ENCODE measurements at regions of chr4 and their contacts with region 1.

Region 1: DNA sequence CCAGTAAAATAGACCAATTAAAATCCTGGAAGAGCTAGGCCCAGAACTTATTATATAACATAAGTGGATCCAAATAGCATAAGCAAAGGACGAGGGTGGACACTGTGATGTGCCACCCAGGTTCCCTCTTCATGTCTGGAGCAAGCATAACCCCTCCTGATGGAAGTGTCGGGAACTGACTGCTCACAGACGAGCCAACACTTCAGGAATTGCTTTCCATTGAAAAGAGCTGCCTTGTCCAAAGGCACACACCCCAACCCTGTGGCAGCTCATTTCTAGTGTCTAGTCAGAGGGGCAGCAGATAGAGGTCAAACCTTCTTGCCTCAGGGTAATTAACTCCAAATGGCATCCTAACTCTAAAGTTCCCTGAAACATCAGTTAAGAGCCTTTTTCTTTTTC is 15.3 kb downstream of the DDIT4L start:
- DNase-seq: no peak
- ATAC-seq: peak in 1 of 4 donors; percentile 12
- H3K4me3 ChIP-seq: no peak overlapping the region
- H3K27ac ChIP-seq: no peak overlapping the region
- H3K4me1 ChIP-seq: peaks cover 12% of the 10 kb centered on the region
- H3K27me3 ChIP-seq: no peaks in the 10 kb centered on the region
- CTCF ChIP-seq: no peak

Region 2: DNA sequence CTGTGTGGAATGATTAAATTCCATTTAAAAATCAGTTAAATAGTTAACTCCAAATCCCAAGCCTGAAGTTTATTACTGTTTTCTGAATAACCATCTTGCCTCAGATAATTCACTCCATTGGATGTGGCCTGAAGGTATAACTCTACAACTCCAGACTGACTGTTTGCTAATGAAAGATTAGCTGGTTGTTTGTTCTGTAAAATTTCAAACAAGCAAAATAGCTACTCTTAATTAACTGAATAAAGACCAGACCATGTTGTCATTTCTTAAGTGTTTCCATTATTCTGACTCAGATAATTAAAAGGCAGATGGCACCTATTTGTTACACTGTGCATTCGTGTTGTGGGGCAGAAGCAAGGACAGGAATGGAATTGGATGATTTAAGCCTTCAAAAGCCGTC is 93.8 kb after region 1 on chr4:
- intact Hi-C with region 1: no loop called
- DNase-seq: no peak
- ATAC-seq: no peak
- H3K4me3 ChIP-seq: no peak overlapping the region
- H3K27ac ChIP-seq: no peak overlapping the region
- H3K4me1 ChIP-seq: no peaks in the 10 kb centered on the region
- H3K27me3 ChIP-seq: no peaks in the 10 kb centered on the region
- CTCF ChIP-seq: no peak

Region 3: GRCh38 chr4:100494166-100494825 is 319.3 kb after region 1 on chr4:
- intact Hi-C with region 1: no loop called
- DNase-seq: no peak
- ATAC-seq: no peak
- H3K4me3 ChIP-seq: no peak overlapping the region
- H3K27ac ChIP-seq: no peak overlapping the region
- H3K4me1 ChIP-seq: no peaks in the 10 kb centered on the region
- H3K27me3 ChIP-seq: no peaks in the 10 kb centered on the region
- CTCF ChIP-seq: no peak

Region 4: DNA sequence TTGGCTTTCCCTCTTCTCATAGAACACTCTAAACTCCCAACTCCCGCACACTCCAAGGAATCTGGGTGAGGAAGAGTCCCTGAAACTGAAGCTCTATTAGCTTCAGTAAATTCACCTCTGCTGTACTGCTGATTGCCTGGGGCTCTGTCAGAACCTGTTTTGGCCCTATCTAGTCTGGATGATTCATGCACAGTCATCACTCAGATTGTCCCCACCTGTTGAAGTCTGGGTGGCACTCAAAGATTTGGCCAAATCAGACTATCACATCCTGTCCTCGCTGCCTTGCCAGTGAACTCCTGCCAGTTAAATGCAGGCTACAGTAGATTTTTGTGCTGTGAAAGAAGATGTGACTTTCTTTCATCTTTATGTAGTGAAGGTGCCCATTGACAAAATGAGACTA is 406.3 kb after region 1 on chr4:
- intact Hi-C with region 1: loop called in 1 of 2 experiments (anchors 2 kb)
- DNase-seq: peak; percentile 20 to 58
- ATAC-seq: peak; percentile 96 to 99 (median 98)
- H3K4me3 ChIP-seq: no peak overlapping the region
- H3K27ac ChIP-seq: peak overlapping the region; percentile 89
- H3K4me1 ChIP-seq: peaks cover 8% of the 10 kb centered on the region
- H3K27me3 ChIP-seq: no peaks in the 10 kb centered on the region
- CTCF ChIP-seq: no peak